ENCODE measurements at regions of chr3 and their contacts with region 1.

Region 1: DNA sequence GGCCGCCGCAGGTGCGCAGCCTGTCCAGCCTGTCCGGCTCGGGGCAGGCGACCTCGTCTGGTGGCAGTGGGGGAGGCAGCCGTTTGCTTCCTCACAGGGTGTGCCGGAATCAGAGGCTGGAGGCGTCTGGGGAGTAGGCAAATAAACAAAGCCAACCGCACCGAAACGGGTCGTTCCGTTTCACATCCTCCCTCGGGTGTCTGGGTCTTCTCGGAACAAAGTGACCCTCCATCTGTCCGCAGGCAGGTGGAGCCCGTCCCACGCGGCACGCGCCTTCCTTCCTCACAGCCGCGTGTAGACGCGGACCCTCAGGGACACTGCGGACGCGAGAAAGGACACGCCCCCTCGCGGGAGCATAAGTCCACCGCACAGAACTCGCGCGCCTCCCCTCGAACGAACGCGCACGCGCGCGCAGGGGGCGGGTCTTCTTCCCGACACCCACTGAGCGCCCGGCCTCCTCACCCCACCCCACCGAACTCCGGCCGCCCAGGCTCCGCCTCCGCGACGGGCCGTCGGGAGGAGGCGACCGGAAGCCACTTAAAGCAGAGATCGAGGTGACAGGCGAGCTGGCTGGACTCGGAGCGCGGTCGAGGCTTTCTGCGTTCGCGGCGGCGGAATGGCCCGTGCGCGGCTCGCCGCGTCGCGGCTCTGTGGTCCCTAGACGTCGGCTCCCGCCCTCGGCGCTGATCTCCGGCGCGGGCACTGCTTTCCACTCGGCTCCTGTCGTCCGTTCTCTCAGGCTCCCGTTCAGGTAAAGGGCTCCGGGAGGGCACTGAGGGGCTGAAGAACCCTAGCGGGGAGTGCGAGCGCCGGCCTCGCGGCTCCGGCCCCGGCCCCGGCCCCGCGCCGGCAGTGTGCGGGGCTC is at the start of gene TIPARP:
- DNase-seq: peak; percentile 95 to 100 (median 98)
- ATAC-seq: peak; percentile 93
- H3K4me3 ChIP-seq: peak within 1 kb of the TSS; percentile 93
- H3K4me3 Mint-ChIP-seq: peak within 1 kb of the TSS; percentile 94 to 98 (median 97)
- H3K27ac ChIP-seq: peak within 1 kb of the TSS; percentile 85
- H3K27ac Mint-ChIP-seq: peak within 1 kb of the TSS; percentile 94 to 99 (median 97)
- H3K4me1 ChIP-seq: peaks cover 25 to 28% of the 10 kb centered on the region in 2 donors
- H3K4me1 Mint-ChIP-seq: peaks cover 34 to 44% (median 39%) of the 10 kb centered on the region in 7 donors
- H3K27me3 ChIP-seq: no peaks in the 10 kb centered on the region
- H3K27me3 Mint-ChIP-seq: no peaks in the 10 kb centered on the region
- total RNA-seq, gene TIPARP: 59.2 to 66.6 (median 64.3) TPM

Region 2: DNA sequence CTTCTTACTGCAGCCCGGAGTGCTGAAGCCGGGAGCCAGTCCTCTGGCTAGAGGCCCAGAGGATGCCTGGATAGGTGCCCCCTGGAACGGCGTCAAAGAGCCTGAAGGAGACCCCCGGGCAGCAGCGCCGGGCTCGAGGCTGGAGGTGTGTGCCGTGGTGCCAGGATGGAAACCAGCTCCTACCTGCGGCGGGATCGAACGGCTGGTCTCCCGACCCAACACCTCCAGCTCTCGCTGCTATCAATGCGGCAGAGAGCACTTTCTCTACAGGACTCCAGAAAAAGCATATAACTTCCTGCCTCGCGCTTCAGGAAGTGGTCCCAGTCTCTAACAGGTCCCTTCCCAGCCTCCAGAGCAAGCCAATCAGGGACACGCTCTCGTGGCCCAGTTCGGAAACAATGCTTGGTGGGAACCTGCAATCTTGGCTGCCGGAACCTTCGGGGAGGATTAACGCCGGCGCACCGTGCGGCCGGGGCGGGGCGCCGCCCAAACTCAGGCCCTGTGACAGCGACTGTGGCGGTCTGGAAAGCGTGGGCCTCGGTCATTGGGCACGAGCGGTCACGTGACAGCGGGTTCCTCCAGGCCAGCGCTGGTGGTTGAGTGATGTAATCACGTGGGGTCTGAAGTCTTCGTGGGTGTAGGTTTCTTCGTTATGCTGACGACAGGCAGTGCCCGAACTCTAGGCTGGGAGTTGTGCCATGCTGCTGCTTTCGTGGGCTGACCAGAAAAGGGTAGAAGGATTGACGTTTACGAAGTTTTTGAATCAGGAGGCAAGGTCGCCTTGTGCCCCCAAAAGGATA is 819.9 kb before region 1 on chr3 and contains the start of gene SLC33A1:
- CTCF ChIA-PET with region 1: no interaction called
- POLR2A ChIA-PET with region 1: interaction called, 4 read pairs
- intact Hi-C with region 1: loop called (anchors 1 kb)
- DNase-seq: peak; percentile 95 to 99 (median 98)
- ATAC-seq: peak; percentile 96
- H3K4me3 ChIP-seq: peak within 1 kb of the TSS; percentile 85
- H3K4me3 Mint-ChIP-seq: peak within 1 kb of the TSS; percentile 86 to 99 (median 95)
- H3K27ac ChIP-seq: peak within 1 kb of the TSS; percentile 90
- H3K27ac Mint-ChIP-seq: peak within 1 kb of the TSS; percentile 97 to 100 (median 99)
- H3K4me1 ChIP-seq: peaks cover 19 to 33% of the 10 kb centered on the region in 2 donors
- H3K4me1 Mint-ChIP-seq: peaks cover 24 to 47% (median 39%) of the 10 kb centered on the region in 7 donors
- H3K27me3 ChIP-seq: no peaks in the 10 kb centered on the region
- H3K27me3 Mint-ChIP-seq: peaks cover 0 to 7% (median 0%) of the 10 kb centered on the region in 5 donors
- total RNA-seq, gene SLC33A1: 19.8 to 40.8 (median 31.9) TPM

Region 3: GRCh38 chr3:156519758-156520162 is 154.5 kb before region 1 on chr3:
- CTCF ChIA-PET with region 1: no interaction called
- POLR2A ChIA-PET with region 1: no interaction called
- intact Hi-C with region 1: loop called in 1 of 2 experiments (anchors 1 kb)
- DNase-seq: no peak
- ATAC-seq: no peak
- H3K4me3 ChIP-seq: no peak overlapping the region
- H3K4me3 Mint-ChIP-seq: no peak overlapping the region
- H3K27ac ChIP-seq: no peak overlapping the region
- H3K27ac Mint-ChIP-seq: no peak overlapping the region
- H3K4me1 ChIP-seq: peaks cover 2 to 6% of the 10 kb centered on the region in 2 donors
- H3K4me1 Mint-ChIP-seq: peaks cover 6 to 26% (median 9%) of the 10 kb centered on the region in 7 donors
- H3K27me3 ChIP-seq: no peaks in the 10 kb centered on the region
- H3K27me3 Mint-ChIP-seq: peaks cover 13 to 84% (median 33%) of the 10 kb centered on the region in 5 donors

Region 4: DNA sequence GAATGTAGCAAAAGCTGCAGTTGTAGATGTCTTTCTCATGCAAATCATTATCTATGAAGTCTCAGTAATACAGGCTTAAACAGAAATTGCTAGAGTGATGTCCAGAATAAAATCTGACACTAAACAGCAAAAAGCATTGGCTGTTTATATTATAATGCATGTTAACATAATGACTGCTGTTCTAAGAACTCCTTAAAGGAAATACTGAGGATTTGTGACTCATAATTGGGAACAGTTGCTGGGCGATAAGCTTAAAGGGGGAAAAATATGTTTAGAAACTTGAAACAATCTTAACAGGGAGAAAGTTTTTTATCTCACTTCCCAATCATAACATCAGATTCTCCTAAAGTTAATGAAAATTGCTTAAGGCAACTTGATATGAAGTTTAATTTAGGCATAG is 17.6 kb after region 1 on chr3:
- CTCF ChIA-PET with region 1: interaction called, 3 read pairs
- POLR2A ChIA-PET with region 1: interaction called, 16 read pairs
- intact Hi-C with region 1: loop called (anchors 1 to 2 kb)
- DNase-seq: no peak
- ATAC-seq: no peak
- H3K4me3 ChIP-seq: no peak overlapping the region
- H3K4me3 Mint-ChIP-seq: no peak overlapping the region
- H3K27ac ChIP-seq: no peak overlapping the region
- H3K27ac Mint-ChIP-seq: peak overlapping the region in 1 of 9 donors; percentile 33
- H3K4me1 ChIP-seq: peaks cover 0 to 20% of the 10 kb centered on the region in 2 donors
- H3K4me1 Mint-ChIP-seq: peaks cover 35 to 61% (median 42%) of the 10 kb centered on the region in 7 donors
- H3K27me3 ChIP-seq: no peaks in the 10 kb centered on the region
- H3K27me3 Mint-ChIP-seq: no peaks in the 10 kb centered on the region

Region 5: DNA sequence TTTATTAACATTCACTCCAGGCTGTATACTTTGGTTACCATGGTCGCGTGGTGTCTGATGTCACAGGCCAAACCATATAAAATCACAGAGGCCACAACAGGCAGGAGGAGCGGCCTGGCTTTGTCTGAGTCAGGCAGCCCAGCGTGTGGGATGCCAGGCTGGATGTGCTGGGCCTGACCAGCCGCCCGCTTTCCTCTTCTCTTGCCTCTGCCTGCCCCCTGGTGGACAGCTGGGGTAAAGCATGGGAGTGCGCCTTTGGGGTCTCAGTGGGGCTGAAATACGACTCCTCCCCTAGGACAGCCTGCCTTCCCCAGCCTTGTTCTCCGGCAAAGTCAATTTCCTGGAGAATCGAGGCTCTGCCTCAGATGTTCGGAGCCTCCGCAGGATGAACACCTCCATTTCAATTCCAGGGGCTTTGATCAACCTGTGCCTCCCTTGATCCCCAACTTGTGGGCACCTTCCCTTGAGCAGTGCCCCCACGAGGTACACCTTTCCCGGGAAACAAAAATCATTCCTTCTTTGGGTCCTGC is 407.5 kb after region 1 on chr3:
- CTCF ChIA-PET with region 1: interaction called, 9 read pairs
- POLR2A ChIA-PET with region 1: interaction called, 43 read pairs
- intact Hi-C with region 1: loop called (anchors 1 kb)
- DNase-seq: peak; percentile 60 to 86 (median 70)
- ATAC-seq: peak; percentile 96
- H3K4me3 ChIP-seq: no peak overlapping the region
- H3K4me3 Mint-ChIP-seq: no peak overlapping the region
- H3K27ac ChIP-seq: no peak overlapping the region
- H3K27ac Mint-ChIP-seq: peak overlapping the region in 8 of 9 donors; percentile 9 to 79 (median 56)
- H3K4me1 ChIP-seq: peaks cover 0 to 12% of the 10 kb centered on the region in 2 donors
- H3K4me1 Mint-ChIP-seq: peaks cover 0 to 54% (median 6%) of the 10 kb centered on the region in 7 donors
- H3K27me3 ChIP-seq: no peaks in the 10 kb centered on the region
- H3K27me3 Mint-ChIP-seq: no peaks in the 10 kb centered on the region

Region 6: DNA sequence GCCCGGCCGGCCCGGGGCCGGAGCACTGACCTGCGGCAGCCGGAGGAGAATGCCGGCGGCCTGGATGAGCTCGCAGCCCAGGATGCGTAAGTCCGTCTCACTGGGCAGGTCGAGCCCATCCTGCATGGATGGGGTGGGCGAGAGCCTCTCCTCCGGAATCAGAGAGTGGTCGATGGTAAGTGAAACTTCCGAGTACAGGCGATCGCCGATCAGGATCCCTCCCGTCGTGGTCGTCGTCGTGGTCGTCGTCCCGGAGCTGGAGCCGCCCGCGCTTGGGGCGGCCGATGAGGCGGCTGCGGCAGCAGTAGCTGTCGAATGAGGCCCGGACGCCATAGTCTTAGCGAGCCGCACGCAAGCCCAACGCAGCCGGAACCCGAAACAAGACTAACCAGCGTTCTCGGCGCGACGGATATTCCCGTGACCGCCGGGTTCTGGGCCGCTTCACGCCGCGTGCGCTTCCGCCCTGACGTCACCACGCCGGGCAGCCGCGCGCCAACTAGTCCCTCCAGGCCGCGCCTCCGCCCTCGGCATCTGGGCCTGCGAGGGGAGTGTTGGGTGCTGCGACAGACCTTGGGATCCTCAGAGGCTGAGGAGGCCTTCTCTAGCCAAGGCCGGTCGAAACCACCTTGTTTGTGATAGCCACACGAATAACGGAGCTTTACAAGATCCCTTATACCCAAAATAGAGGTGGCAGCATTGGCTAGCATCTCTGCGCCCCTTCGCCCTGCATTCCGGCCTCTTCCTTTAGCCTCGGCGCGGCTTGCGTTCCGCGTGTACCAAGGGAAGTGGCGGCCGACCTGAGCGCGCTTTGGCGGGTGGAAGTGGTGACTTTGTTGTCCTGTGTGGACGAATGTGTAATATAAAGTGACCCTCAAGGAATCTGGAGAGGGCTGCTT is 485.7 kb after region 1 on chr3 and contains the start of gene CCNL1:
- CTCF ChIA-PET with region 1: no interaction called
- POLR2A ChIA-PET with region 1: interaction called, 31 read pairs
- intact Hi-C with region 1: loop called (anchors 1 kb)
- DNase-seq: peak; percentile 94 to 98 (median 97)
- ATAC-seq: peak; percentile 88
- H3K4me3 ChIP-seq: peak within 1 kb of the TSS; percentile 92
- H3K4me3 Mint-ChIP-seq: peak within 1 kb of the TSS; percentile 91 to 100 (median 96)
- H3K27ac ChIP-seq: peak within 1 kb of the TSS; percentile 97
- H3K27ac Mint-ChIP-seq: peak within 1 kb of the TSS; percentile 96 to 100 (median 98)
- H3K4me1 ChIP-seq: peaks cover 39 to 45% of the 10 kb centered on the region in 2 donors
- H3K4me1 Mint-ChIP-seq: peaks cover 37 to 69% (median 65%) of the 10 kb centered on the region in 7 donors
- H3K27me3 ChIP-seq: no peaks in the 10 kb centered on the region
- H3K27me3 Mint-ChIP-seq: no peaks in the 10 kb centered on the region
- total RNA-seq, gene CCNL1: 230 to 1,170 (median 374) TPM

Region 7: DNA sequence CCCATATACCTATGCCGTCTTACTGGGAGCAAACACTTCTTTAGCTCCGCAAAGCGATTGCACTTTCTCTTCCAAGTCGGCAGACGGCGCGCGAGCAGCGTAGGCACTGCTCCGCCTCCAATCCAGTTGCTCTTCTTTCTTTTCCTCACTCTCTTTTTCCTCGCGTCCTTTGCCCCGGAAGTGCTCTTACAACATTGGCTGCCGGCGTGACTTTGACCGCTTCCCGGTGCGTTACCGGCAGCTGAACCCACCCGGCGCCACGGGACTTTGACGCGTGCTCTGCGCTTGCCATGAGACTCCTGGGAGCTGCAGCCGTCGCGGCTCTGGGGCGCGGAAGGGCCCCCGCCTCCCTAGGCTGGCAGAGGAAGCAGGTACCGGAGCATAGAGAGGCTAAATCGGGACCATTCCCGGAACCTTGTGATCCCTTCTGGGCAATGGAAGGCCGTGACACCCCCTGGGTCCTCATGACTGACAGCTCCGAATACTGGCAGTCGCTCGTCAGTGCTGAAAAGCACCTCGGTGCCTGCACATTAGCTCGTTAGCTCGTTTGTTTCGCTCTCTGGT is 1970.1 kb after region 1 on chr3 and contains the start of gene GFM1:
- CTCF ChIA-PET with region 1: no interaction called
- POLR2A ChIA-PET with region 1: no interaction called
- intact Hi-C with region 1: loop called in 1 of 2 experiments (anchors 10 kb)
- DNase-seq: peak; percentile 76 to 92 (median 86)
- ATAC-seq: peak; percentile 98
- H3K4me3 ChIP-seq: peak within 1 kb of the TSS; percentile 98
- H3K4me3 Mint-ChIP-seq: peak within 1 kb of the TSS; percentile 87 to 98 (median 96)
- H3K27ac ChIP-seq: peak within 1 kb of the TSS; percentile 82
- H3K27ac Mint-ChIP-seq: peak within 1 kb of the TSS; percentile 63 to 96 (median 93)
- H3K4me1 ChIP-seq: peaks cover 8 to 21% of the 10 kb centered on the region in 2 donors
- H3K4me1 Mint-ChIP-seq: peaks cover 17 to 58% (median 41%) of the 10 kb centered on the region in 7 donors
- H3K27me3 ChIP-seq: no peaks in the 10 kb centered on the region
- H3K27me3 Mint-ChIP-seq: no peaks in the 10 kb centered on the region
- total RNA-seq, gene GFM1: 36.4 to 43.4 (median 41.8) TPM